Activated CD4-positive, alpha-beta T cell treated with anti-CD3 and anti-CD28 coated beads for 36 hours (primary cell): ENCODE measurements at regions of chr13 and their contacts with region 1.

Region 1: GRCh38 chr13:44710576-44710975 is 134.4 kb upstream of the TSC22D1 start:
- DNase-seq: peak; percentile 54
- ATAC-seq: peak; percentile 100
- H3K4me3 Mint-ChIP-seq: no peak overlapping the region
- H3K27ac Mint-ChIP-seq: no peak overlapping the region
- H3K4me1 Mint-ChIP-seq: peaks cover 13% of the 10 kb centered on the region
- H3K27me3 Mint-ChIP-seq: peaks cover 11% of the 10 kb centered on the region

Region 2: GRCh38 chr13:44648392-44649103 is 62.0 kb before region 1 on chr13:
- CTCF ChIA-PET with region 1: interaction called, 3 read pairs
- POLR2A ChIA-PET with region 1: no interaction called
- intact Hi-C with region 1: loop called in 1 of 2 experiments (anchors 1 kb)
- DNase-seq: peak; percentile 25
- ATAC-seq: peak; percentile 85
- H3K4me3 Mint-ChIP-seq: no peak overlapping the region
- H3K27ac Mint-ChIP-seq: peak overlapping the region; percentile 37
- H3K4me1 Mint-ChIP-seq: peaks cover 23% of the 10 kb centered on the region
- H3K27me3 Mint-ChIP-seq: peaks cover 26% of the 10 kb centered on the region

Region 3: GRCh38 chr13:44734201-44734707 is 23.7 kb after region 1 on chr13:
- CTCF ChIA-PET with region 1: no interaction called
- POLR2A ChIA-PET with region 1: no interaction called
- intact Hi-C with region 1: no loop called
- DNase-seq: no peak
- ATAC-seq: no peak
- H3K4me3 Mint-ChIP-seq: no peak overlapping the region
- H3K27ac Mint-ChIP-seq: no peak overlapping the region
- H3K4me1 Mint-ChIP-seq: no peaks in the 10 kb centered on the region
- H3K27me3 Mint-ChIP-seq: peaks cover 2% of the 10 kb centered on the region

Region 4: DNA sequence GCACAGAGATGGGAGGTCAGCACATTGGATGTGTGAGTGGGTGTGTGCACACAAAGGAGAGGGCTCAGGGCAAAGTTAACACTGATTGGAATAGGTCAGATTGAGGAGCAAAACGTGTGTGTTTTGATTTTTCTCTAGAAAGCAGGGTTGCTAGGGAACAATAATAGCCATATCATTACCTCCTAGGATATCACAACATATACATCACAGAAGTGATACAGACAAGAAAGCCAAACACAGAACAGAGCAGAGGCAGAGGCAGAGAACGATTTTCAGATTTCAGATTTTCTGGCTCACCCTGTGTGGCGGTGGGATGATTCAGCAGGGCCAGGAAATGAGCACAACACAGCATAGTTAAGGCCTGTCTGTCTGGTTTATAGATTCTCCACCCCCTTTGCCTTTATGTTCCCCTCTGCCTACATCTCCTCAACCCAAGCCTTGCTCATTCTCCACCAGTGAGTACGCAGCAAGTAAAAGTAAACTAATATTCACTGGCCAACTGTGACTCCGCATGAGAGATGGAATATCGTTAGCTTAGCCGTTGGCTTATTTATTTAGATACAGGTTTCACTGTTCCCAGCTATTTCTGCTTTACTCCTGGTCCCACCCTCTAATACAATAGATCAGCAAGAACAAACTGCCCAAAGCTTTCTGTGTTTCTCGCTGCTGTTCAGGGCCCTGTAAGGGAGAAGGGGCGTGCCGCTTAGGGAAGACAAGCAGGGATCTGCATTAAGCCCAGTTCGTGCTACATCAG is 48.2 kb after region 1 on chr13:
- CTCF ChIA-PET with region 1: no interaction called
- POLR2A ChIA-PET with region 1: no interaction called
- intact Hi-C with region 1: loop called in 1 of 2 experiments (anchors 2 kb)
- DNase-seq: peak; percentile 70
- ATAC-seq: peak; percentile 99
- H3K4me3 Mint-ChIP-seq: no peak overlapping the region
- H3K27ac Mint-ChIP-seq: peak overlapping the region; percentile 48
- H3K4me1 Mint-ChIP-seq: peaks cover 24% of the 10 kb centered on the region
- H3K27me3 Mint-ChIP-seq: peaks cover 2% of the 10 kb centered on the region

Region 5: DNA sequence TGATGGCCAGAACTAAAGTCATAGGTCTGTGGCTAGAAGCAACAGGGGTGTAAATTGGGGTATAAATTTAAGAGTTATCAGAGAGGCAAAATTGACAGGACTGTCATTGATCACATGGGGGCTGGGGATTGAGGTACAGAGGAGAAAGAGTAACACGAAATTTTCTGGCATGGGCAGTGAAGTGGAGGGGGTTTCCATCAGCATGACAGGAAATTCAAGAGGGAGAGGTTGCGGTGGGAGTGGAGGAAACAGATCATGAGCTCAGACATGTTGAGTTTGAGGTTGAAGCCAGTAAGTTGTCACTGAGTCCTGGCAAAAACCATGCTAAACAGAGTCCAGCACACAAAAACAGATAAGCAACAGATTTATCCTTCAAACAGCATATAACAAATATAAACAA is 57.7 kb after region 1 on chr13:
- CTCF ChIA-PET with region 1: no interaction called
- POLR2A ChIA-PET with region 1: no interaction called
- intact Hi-C with region 1: loop called (anchors 1 to 2 kb)
- DNase-seq: peak; percentile 69
- ATAC-seq: peak; percentile 70
- H3K4me3 Mint-ChIP-seq: peak overlapping the region; percentile 5
- H3K27ac Mint-ChIP-seq: peak overlapping the region; percentile 90
- H3K4me1 Mint-ChIP-seq: peaks cover 28% of the 10 kb centered on the region
- H3K27me3 Mint-ChIP-seq: no peaks in the 10 kb centered on the region

Region 6: GRCh38 chr13:44815623-44816022 is 105.0 kb after region 1 on chr13:
- CTCF ChIA-PET with region 1: no interaction called
- POLR2A ChIA-PET with region 1: no interaction called
- intact Hi-C with region 1: loop called (anchors 1 kb)
- DNase-seq: peak; percentile 70
- ATAC-seq: peak; percentile 85
- H3K4me3 Mint-ChIP-seq: no peak overlapping the region
- H3K27ac Mint-ChIP-seq: no peak overlapping the region
- H3K4me1 Mint-ChIP-seq: peaks cover 32% of the 10 kb centered on the region
- H3K27me3 Mint-ChIP-seq: peaks cover 22% of the 10 kb centered on the region